ENCODE measurements at regions of chr15 and their contacts with region 1.

Region 1: DNA sequence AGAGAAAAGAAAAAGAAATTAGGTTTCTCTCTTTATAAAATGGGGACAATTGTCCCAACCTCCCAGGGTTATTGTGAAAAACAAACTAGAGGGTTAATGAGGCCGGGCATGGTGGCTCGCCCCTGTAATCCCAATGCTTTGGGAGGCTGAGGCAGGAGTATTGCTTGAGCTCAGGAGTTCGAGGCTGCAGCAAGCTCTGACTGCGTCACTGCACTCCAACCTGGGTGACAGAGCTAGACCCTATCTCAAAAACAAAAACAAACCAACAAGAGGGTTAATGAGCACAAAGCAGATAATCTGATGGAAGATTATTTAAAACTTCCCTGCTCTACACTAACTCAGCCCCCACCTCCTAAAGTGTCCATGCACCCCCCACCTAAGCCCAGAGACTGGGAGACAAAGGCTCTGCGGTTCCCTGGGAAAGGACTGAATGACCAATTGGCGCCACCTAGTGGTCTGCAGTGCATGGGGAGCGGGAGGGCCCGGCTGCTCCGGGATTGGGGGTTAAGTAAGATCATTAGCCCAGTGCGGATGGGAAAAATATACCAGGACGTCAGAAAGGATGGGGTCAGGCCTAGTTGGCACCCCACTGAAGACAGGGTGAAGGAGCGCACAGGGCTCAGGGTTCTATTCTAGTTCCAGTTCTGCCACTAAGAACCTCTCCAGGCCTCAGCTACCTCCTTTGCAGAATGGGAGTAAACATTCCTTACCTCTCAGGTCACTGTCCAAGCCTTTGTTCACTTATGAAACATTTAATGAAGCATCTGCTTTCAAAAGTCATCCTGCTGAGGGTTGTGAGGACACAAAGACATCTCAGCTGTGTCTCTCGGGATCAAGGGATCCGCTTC is 15.6 kb downstream of the PIF1 start:
- DNase-seq: no peak
- ATAC-seq: peak; percentile 58
- H3K4me3 ChIP-seq: no peak overlapping the region
- H3K27ac ChIP-seq: no peak overlapping the region
- H3K4me1 ChIP-seq: peaks cover 17% of the 10 kb centered on the region
- H3K27me3 ChIP-seq: no peaks in the 10 kb centered on the region
- CTCF ChIP-seq: peak; percentile 92 to 95 (median 95)
- EP300 ChIP-seq: no peak
- POLR2A ChIP-seq: no peak
- RAD21 ChIP-seq: peak; percentile 92

Region 2: GRCh38 chr15:64622410-64623260 is 187.2 kb before region 1 on chr15:
- CTCF ChIA-PET with region 1: no interaction called
- POLR2A ChIA-PET with region 1: no interaction called
- RAD21 ChIA-PET with region 1: no interaction called
- SMC1A ChIA-PET with region 1: no interaction called
- in situ Hi-C with region 1: no loop called
- intact Hi-C with region 1: no loop called
- DNase-seq: peak; percentile 96
- ATAC-seq: peak; percentile 93
- H3K4me3 ChIP-seq: no peak overlapping the region
- H3K27ac ChIP-seq: peak overlapping the region; percentile 90
- H3K4me1 ChIP-seq: peaks cover 55% of the 10 kb centered on the region
- H3K27me3 ChIP-seq: no peaks in the 10 kb centered on the region
- CTCF ChIP-seq: no peak
- EP300 ChIP-seq: peak; percentile 69 to 74
- POLR2A ChIP-seq: no peak
- RAD21 ChIP-seq: no peak

Region 3: DNA sequence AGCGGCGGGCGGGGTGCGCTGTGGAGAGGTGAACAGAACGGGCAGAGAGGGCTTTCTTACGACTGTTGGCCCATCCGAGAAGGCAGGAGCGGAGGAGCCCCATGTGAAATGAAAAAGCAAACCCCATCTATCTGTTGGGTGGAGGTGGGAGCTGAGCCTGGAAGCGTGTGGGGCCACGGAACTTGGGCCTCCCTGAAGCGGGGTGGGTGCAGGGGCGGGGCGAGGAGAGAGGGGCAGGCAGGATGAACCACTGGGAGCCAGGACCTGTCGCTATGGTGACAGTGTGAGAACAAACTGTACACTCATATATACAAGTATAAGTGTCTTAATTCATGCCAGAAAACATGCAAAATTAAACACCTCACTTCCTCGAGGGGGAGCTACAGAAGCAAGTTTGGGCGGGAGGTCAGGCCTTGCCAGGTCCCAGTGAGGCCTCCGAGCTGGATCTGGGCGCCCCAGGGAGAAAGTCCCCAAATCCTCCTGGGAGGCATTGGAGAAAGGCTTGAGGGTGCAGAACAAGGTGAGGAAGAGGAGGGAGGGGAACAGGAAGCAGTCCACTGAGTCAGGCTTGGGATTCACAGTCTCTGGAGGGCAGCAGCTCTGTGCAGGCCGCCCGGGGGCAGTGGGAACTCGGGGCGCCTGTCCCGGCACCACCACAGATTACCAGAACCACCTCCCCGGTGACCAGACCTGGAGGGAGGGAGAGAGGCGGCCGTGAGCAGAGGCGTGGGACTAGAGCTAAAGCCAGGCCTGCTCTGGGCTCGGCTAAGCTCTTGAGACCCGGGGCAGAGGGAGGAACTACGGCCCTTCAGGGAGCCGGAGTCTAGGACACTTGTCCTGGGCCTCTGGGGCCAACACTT is 69.3 kb before region 1 on chr15:
- CTCF ChIA-PET with region 1: interaction called, 529 read pairs
- POLR2A ChIA-PET with region 1: interaction called, 6 read pairs
- RAD21 ChIA-PET with region 1: interaction called, 148 read pairs
- SMC1A ChIA-PET with region 1: interaction called, 308 read pairs
- in situ Hi-C with region 1: no loop called
- intact Hi-C with region 1: no loop called
- DNase-seq: no peak
- ATAC-seq: peak; percentile 80
- H3K4me3 ChIP-seq: no peak overlapping the region
- H3K27ac ChIP-seq: no peak overlapping the region
- H3K4me1 ChIP-seq: no peaks in the 10 kb centered on the region
- H3K27me3 ChIP-seq: no peaks in the 10 kb centered on the region
- CTCF ChIP-seq: peak; percentile 21 to 48 (median 25); a peak in 4 of 6 replicates
- EP300 ChIP-seq: no peak
- POLR2A ChIP-seq: no peak
- RAD21 ChIP-seq: peak; percentile 68

Region 4: GRCh38 chr15:64767203-64767602 is 42.7 kb before region 1 on chr15:
- CTCF ChIA-PET with region 1: interaction called, 23 read pairs
- POLR2A ChIA-PET with region 1: interaction called, 4 read pairs
- RAD21 ChIA-PET with region 1: interaction called, 8 read pairs
- SMC1A ChIA-PET with region 1: no interaction called
- in situ Hi-C with region 1: no loop called
- intact Hi-C with region 1: no loop called
- DNase-seq: no peak
- ATAC-seq: peak; percentile 73
- H3K4me3 ChIP-seq: no peak overlapping the region
- H3K27ac ChIP-seq: no peak overlapping the region
- H3K4me1 ChIP-seq: no peaks in the 10 kb centered on the region
- H3K27me3 ChIP-seq: no peaks in the 10 kb centered on the region
- CTCF ChIP-seq: peak in 2 of 3 experiments; percentile 12 to 27; a peak in 2 of 6 replicates
- EP300 ChIP-seq: no peak
- POLR2A ChIP-seq: no peak
- RAD21 ChIP-seq: no peak

Region 5: DNA sequence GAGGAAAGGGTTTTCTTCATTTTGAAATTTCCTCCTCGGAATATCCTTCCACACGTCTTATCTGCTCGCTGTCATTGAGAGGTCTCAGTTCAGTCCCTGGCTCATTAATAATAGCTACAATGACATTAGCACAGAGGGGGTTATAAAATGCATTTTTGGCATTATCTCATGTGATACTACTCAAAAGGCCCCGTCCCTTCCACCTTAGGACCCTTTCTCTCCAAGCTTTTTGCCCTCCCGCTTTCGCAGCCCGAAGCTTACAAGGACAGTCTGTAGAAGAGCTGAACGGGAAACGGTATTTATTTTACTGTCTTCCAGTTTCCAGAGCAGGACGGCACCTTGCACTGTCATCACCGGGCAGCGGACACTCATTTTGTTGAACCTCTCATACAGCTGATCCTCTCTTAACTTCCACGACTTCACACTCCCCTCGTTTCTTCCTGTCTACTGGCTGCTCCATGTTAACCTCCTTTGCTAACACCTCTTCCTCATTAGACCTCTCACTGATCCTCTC is 26.2 kb after region 1 on chr15:
- CTCF ChIA-PET with region 1: interaction called, 115 read pairs
- POLR2A ChIA-PET with region 1: interaction called, 7 read pairs
- RAD21 ChIA-PET with region 1: interaction called, 26 read pairs
- SMC1A ChIA-PET with region 1: interaction called, 28 read pairs
- in situ Hi-C with region 1: no loop called
- intact Hi-C with region 1: no loop called
- DNase-seq: no peak
- ATAC-seq: peak; percentile 9
- H3K4me3 ChIP-seq: no peak overlapping the region
- H3K27ac ChIP-seq: no peak overlapping the region
- H3K4me1 ChIP-seq: 0 out of 2 replicates have a peak, but pooled peaks cover 10% of the 10 kb centered on the region
- H3K27me3 ChIP-seq: no peaks in the 10 kb centered on the region
- CTCF ChIP-seq: no peak
- EP300 ChIP-seq: no peak
- POLR2A ChIP-seq: no peak
- RAD21 ChIP-seq: no peak

Region 6: GRCh38 chr15:64905119-64905831 is 95.4 kb after region 1 on chr15:
- CTCF ChIA-PET with region 1: interaction called, 91 read pairs
- POLR2A ChIA-PET with region 1: interaction called, 11 read pairs
- RAD21 ChIA-PET with region 1: interaction called, 53 read pairs
- SMC1A ChIA-PET with region 1: interaction called, 42 read pairs
- in situ Hi-C with region 1: no loop called
- intact Hi-C with region 1: no loop called
- DNase-seq: no peak
- ATAC-seq: peak; percentile 98
- H3K4me3 ChIP-seq: peak overlapping the region; percentile 46; the same call in 1 of the 2 replicates
- H3K27ac ChIP-seq: 0 out of 2 replicates have a peak overlapping the region, but pooled peaks have one; percentile 20
- H3K4me1 ChIP-seq: peaks cover 13% of the 10 kb centered on the region
- H3K27me3 ChIP-seq: no peaks in the 10 kb centered on the region
- CTCF ChIP-seq: peak; percentile 87 to 91 (median 88)
- EP300 ChIP-seq: no peak
- POLR2A ChIP-seq: peak; percentile 24; the same call in 1 of the 2 replicates
- RAD21 ChIP-seq: peak; percentile 86